CD8-positive, alpha-beta T cell (primary cell): ENCODE measurements at regions of chr2 and their contacts with region 1.

Region 1: GRCh38 chr2:86440631-86441391 is at the start of gene KDM3A:
- DNase-seq: peak; percentile 98 to 100 (median 99)
- ATAC-seq: peak; percentile 76
- H3K4me3 ChIP-seq: peak within 1 kb of the TSS; percentile 74 to 80
- H3K4me3 Mint-ChIP-seq: peak within 1 kb of the TSS; percentile 97
- H3K27ac ChIP-seq: peak within 1 kb of the TSS; percentile 85 to 91
- H3K27ac Mint-ChIP-seq: peak within 1 kb of the TSS; percentile 99
- H3K4me1 ChIP-seq: peaks cover 31% of the 10 kb centered on the region
- H3K4me1 Mint-ChIP-seq: peaks cover 44% of the 10 kb centered on the region
- H3K27me3 ChIP-seq: no peaks in the 10 kb centered on the region
- H3K27me3 Mint-ChIP-seq: no peaks in the 10 kb centered on the region
- CTCF ChIP-seq: no peak
- total RNA-seq, gene KDM3A: 226 to 227 TPM

Region 2: GRCh38 chr2:85234868-85235267 is 1205.9 kb before region 1 on chr2:
- CTCF ChIA-PET with region 1: no interaction called
- POLR2A ChIA-PET with region 1: no interaction called
- intact Hi-C with region 1: no loop called
- DNase-seq: no peak
- ATAC-seq: no peak
- H3K4me3 ChIP-seq: no peak overlapping the region
- H3K4me3 Mint-ChIP-seq: no peak overlapping the region
- H3K27ac ChIP-seq: no peak overlapping the region
- H3K27ac Mint-ChIP-seq: no peak overlapping the region
- H3K4me1 ChIP-seq: no peaks in the 10 kb centered on the region
- H3K4me1 Mint-ChIP-seq: no peaks in the 10 kb centered on the region
- H3K27me3 ChIP-seq: no peaks in the 10 kb centered on the region
- H3K27me3 Mint-ChIP-seq: peaks cover 33% of the 10 kb centered on the region
- CTCF ChIP-seq: no peak

Region 3: GRCh38 chr2:85318222-85319074 is 1122.4 kb before region 1 on chr2:
- CTCF ChIA-PET with region 1: no interaction called
- POLR2A ChIA-PET with region 1: no interaction called
- intact Hi-C with region 1: no loop called
- DNase-seq: peak in 4 of 9 experiments; percentile 27 to 55 (median 40)
- ATAC-seq: peak; percentile 75
- H3K4me3 ChIP-seq: peak overlapping the region in 1 of 2 experiments; percentile 12
- H3K4me3 Mint-ChIP-seq: peak overlapping the region; percentile 63
- H3K27ac ChIP-seq: peak overlapping the region in 1 of 2 experiments; percentile 49
- H3K27ac Mint-ChIP-seq: peak overlapping the region; percentile 93
- H3K4me1 ChIP-seq: peaks cover 54% of the 10 kb centered on the region
- H3K4me1 Mint-ChIP-seq: peaks cover 68% of the 10 kb centered on the region
- H3K27me3 ChIP-seq: no peaks in the 10 kb centered on the region
- H3K27me3 Mint-ChIP-seq: no peaks in the 10 kb centered on the region
- CTCF ChIP-seq: no peak

Region 4: DNA sequence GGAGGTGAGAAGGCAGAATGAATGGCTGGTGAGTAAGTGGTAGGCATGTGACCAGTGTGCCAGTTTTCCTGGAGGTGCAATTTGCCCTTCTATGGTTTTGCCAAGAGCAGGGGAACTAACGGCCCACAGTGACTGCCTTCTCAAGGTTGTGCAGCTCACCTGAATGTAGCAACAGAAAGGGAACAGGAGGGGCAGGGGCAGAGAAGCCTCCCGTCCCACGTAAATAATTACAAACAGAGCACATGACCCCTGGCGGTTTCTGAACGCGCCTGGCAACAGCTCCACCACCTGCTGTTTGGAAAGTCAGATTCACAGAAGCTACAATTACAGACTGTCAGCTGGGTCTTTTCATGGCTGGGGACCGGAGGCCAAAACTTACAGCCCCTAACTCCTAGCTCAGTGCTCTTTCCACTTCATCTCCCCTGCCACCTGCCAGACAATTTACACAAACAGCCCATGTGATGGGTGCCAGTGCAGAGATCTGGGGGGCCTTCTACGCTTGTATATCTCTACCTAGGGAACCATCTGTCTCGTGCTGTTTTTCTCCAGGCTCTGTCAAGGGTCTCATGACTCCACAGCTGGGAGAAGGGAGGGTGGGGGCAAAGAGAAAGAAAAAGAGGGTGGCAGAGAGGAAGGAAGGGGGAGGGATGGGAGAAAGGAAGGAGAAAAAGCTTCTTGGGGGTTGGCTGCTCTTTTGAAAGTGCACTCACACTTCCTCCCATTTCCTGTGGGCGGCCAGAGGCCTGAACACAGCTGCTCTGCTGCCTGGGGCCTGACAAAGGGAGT is 404.7 kb before region 1 on chr2:
- CTCF ChIA-PET with region 1: no interaction called
- POLR2A ChIA-PET with region 1: interaction called, 6 read pairs
- intact Hi-C with region 1: loop called (anchors 5 kb)
- DNase-seq: peak; percentile 42 to 91 (median 72)
- ATAC-seq: peak; percentile 50
- H3K4me3 ChIP-seq: peak overlapping the region; percentile 4 to 41
- H3K4me3 Mint-ChIP-seq: peak overlapping the region; percentile 79
- H3K27ac ChIP-seq: peak overlapping the region; percentile 87 to 93
- H3K27ac Mint-ChIP-seq: peak overlapping the region; percentile 100
- H3K4me1 ChIP-seq: peaks cover 83% of the 10 kb centered on the region
- H3K4me1 Mint-ChIP-seq: peaks cover 86% of the 10 kb centered on the region
- H3K27me3 ChIP-seq: no peaks in the 10 kb centered on the region
- H3K27me3 Mint-ChIP-seq: no peaks in the 10 kb centered on the region
- CTCF ChIP-seq: peak; percentile 27

Region 5: GRCh38 chr2:86221066-86221684 is 219.6 kb before region 1 on chr2:
- CTCF ChIA-PET with region 1: interaction called, 11 read pairs
- POLR2A ChIA-PET with region 1: interaction called, 10 read pairs
- intact Hi-C with region 1: no loop called
- DNase-seq: peak in 8 of 9 experiments; percentile 18 to 69 (median 38)
- ATAC-seq: peak; percentile 74
- H3K4me3 ChIP-seq: no peak overlapping the region
- H3K4me3 Mint-ChIP-seq: no peak overlapping the region
- H3K27ac ChIP-seq: no peak overlapping the region
- H3K27ac Mint-ChIP-seq: no peak overlapping the region
- H3K4me1 ChIP-seq: peaks cover 4% of the 10 kb centered on the region
- H3K4me1 Mint-ChIP-seq: peaks cover 9% of the 10 kb centered on the region
- H3K27me3 ChIP-seq: no peaks in the 10 kb centered on the region
- H3K27me3 Mint-ChIP-seq: no peaks in the 10 kb centered on the region
- CTCF ChIP-seq: peak; percentile 72

Region 6: GRCh38 chr2:86323273-86324021 is 117.4 kb before region 1 on chr2:
- CTCF ChIA-PET with region 1: no interaction called
- POLR2A ChIA-PET with region 1: no interaction called
- intact Hi-C with region 1: no loop called
- DNase-seq: no peak
- ATAC-seq: no peak
- H3K4me3 ChIP-seq: no peak overlapping the region
- H3K4me3 Mint-ChIP-seq: no peak overlapping the region
- H3K27ac ChIP-seq: no peak overlapping the region
- H3K27ac Mint-ChIP-seq: no peak overlapping the region
- H3K4me1 ChIP-seq: peaks cover 7% of the 10 kb centered on the region
- H3K4me1 Mint-ChIP-seq: peaks cover 13% of the 10 kb centered on the region
- H3K27me3 ChIP-seq: no peaks in the 10 kb centered on the region
- H3K27me3 Mint-ChIP-seq: peaks cover 2% of the 10 kb centered on the region
- CTCF ChIP-seq: no peak

Region 7: DNA sequence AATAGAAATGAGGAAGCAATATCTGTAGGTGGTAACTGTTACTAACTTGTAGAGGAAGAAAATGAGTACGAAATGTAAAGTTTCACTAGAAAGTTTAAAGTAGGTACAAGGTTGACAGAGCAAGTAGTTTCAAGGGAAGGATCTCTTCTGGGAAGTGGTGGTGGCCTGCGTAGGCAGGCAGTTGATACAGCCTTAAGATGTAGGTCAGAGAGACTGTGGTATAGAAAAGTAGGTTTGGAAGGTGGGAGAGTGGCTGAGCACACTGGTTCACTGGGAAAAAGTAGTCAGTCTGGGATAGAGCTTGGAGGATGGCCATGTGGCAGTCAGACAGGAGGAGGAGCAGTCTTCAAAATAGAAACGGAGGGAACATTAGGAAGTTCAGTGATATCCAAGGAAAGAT is 23.8 kb after region 1 on chr2:
- CTCF ChIA-PET with region 1: interaction called, 13 read pairs
- POLR2A ChIA-PET with region 1: interaction called, 15 read pairs
- intact Hi-C with region 1: no loop called
- DNase-seq: no peak
- ATAC-seq: no peak
- H3K4me3 ChIP-seq: no peak overlapping the region
- H3K4me3 Mint-ChIP-seq: no peak overlapping the region
- H3K27ac ChIP-seq: no peak overlapping the region
- H3K27ac Mint-ChIP-seq: peak overlapping the region; percentile 7
- H3K4me1 ChIP-seq: peaks cover 14% of the 10 kb centered on the region
- H3K4me1 Mint-ChIP-seq: peaks cover 49% of the 10 kb centered on the region
- H3K27me3 ChIP-seq: no peaks in the 10 kb centered on the region
- H3K27me3 Mint-ChIP-seq: no peaks in the 10 kb centered on the region
- CTCF ChIP-seq: no peak

Region 8: DNA sequence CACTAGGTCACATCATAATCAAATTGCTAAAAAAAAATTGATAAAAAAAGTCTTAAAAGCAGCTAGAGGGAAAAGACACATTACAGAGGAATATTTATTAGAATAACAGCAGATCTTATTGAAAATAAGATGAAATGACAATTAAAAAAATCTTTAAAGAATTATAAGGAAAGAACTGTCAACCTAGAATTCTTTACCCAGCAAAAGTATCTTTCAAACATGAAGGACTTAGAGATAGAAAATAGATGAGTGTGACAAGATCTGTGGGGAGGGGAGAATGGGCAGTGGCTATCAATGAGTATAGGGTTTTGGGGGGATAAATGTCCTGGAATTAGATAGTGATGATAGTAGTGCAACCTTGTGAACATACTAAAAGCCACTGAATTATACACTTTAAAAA is 209.4 kb after region 1 on chr2:
- CTCF ChIA-PET with region 1: no interaction called
- POLR2A ChIA-PET with region 1: no interaction called
- intact Hi-C with region 1: no loop called
- DNase-seq: no peak
- ATAC-seq: no peak
- H3K4me3 ChIP-seq: no peak overlapping the region
- H3K4me3 Mint-ChIP-seq: no peak overlapping the region
- H3K27ac ChIP-seq: no peak overlapping the region
- H3K27ac Mint-ChIP-seq: no peak overlapping the region
- H3K4me1 ChIP-seq: no peaks in the 10 kb centered on the region
- H3K4me1 Mint-ChIP-seq: no peaks in the 10 kb centered on the region
- H3K27me3 ChIP-seq: no peaks in the 10 kb centered on the region
- H3K27me3 Mint-ChIP-seq: peaks cover 4% of the 10 kb centered on the region
- CTCF ChIP-seq: no peak

Region 9: GRCh38 chr2:86790676-86791572 is 350.1 kb after region 1 on chr2 and contains the start of gene CD8A:
- CTCF ChIA-PET with region 1: no interaction called
- POLR2A ChIA-PET with region 1: interaction called, 4 read pairs
- intact Hi-C with region 1: loop called (anchors 2 to 5 kb)
- DNase-seq: peak; percentile 60 to 93 (median 82)
- ATAC-seq: peak; percentile 23
- H3K4me3 ChIP-seq: peak within 1 kb of the TSS; percentile 93 to 98
- H3K4me3 Mint-ChIP-seq: peak within 1 kb of the TSS; percentile 95
- H3K27ac ChIP-seq: peak within 1 kb of the TSS; percentile 95 to 99
- H3K27ac Mint-ChIP-seq: peak within 1 kb of the TSS; percentile 99
- H3K4me1 ChIP-seq: peaks cover 69% of the 10 kb centered on the region
- H3K4me1 Mint-ChIP-seq: peaks cover 73% of the 10 kb centered on the region
- H3K27me3 ChIP-seq: no peaks in the 10 kb centered on the region
- H3K27me3 Mint-ChIP-seq: no peaks in the 10 kb centered on the region
- CTCF ChIP-seq: no peak
- total RNA-seq, gene CD8A: 502 to 503 TPM

Region 10: GRCh38 chr2:88016086-88016959 is 1575.5 kb after region 1 on chr2 and contains the start of gene RNU2-63P:
- CTCF ChIA-PET with region 1: no interaction called
- POLR2A ChIA-PET with region 1: no interaction called
- intact Hi-C with region 1: loop called (anchors 5 kb)
- DNase-seq: peak; percentile 65 to 89 (median 79)
- ATAC-seq: peak; percentile 86
- H3K4me3 ChIP-seq: peak within 1 kb of the TSS; percentile 68 to 92
- H3K4me3 Mint-ChIP-seq: peak within 1 kb of the TSS; percentile 100
- H3K27ac ChIP-seq: peak within 1 kb of the TSS; percentile 89 to 90
- H3K27ac Mint-ChIP-seq: peak within 1 kb of the TSS; percentile 100
- H3K4me1 ChIP-seq: peaks cover 5% of the 10 kb centered on the region
- H3K4me1 Mint-ChIP-seq: peaks cover 22% of the 10 kb centered on the region
- H3K27me3 ChIP-seq: no peaks in the 10 kb centered on the region
- H3K27me3 Mint-ChIP-seq: no peaks in the 10 kb centered on the region
- CTCF ChIP-seq: no peak
- total RNA-seq, gene RNU2-63P: 4.4 to 9.1 TPM